Naive thymus-derived CD4-positive, alpha-beta T cell (primary cell): ENCODE measurements at regions of chr7 and their contacts with region 1.

Region 1: GRCh38 chr7:140810830-140811556 is 113.7 kb downstream of the BRAF start:
- DNase-seq: peak; percentile 19 to 76 (median 65)
- ATAC-seq: peak; percentile 91
- H3K4me3 ChIP-seq: no peak overlapping the region
- H3K4me3 Mint-ChIP-seq: no peak overlapping the region
- H3K27ac ChIP-seq: no peak overlapping the region
- H3K27ac Mint-ChIP-seq: peak overlapping the region in 6 of 9 donors; percentile 6 to 82 (median 60)
- H3K4me1 ChIP-seq: no peaks in the 10 kb centered on the region
- H3K4me1 Mint-ChIP-seq: peaks cover 0 to 22% (median 4%) of the 10 kb centered on the region in 7 donors
- H3K27me3 ChIP-seq: no peaks in the 10 kb centered on the region
- H3K27me3 Mint-ChIP-seq: no peaks in the 10 kb centered on the region

Region 2: DNA sequence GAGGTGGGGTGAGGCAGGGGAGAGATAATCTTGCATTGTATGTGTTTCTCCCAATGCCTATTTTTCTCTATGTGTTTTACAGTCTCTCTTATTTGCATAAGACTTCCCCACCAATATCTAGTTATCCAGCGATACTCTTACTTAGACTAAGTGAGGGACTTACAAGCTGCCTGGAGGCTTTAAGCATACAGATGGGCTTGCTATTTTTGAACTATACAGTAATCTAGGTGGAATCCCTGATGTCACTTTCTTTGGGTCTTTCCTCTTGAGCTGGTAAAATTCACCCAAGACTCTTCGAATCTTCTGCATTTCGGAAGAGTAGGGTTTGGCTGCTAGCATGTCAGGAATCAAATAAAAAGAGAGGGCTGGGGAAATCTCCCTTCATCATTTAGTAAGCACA is 37.9 kb before region 1 on chr7:
- CTCF ChIA-PET with region 1: no interaction called
- POLR2A ChIA-PET with region 1: no interaction called
- intact Hi-C with region 1: no loop called
- DNase-seq: no peak
- ATAC-seq: no peak
- H3K4me3 ChIP-seq: no peak overlapping the region
- H3K4me3 Mint-ChIP-seq: no peak overlapping the region
- H3K27ac ChIP-seq: no peak overlapping the region
- H3K27ac Mint-ChIP-seq: no peak overlapping the region
- H3K4me1 ChIP-seq: no peaks in the 10 kb centered on the region
- H3K4me1 Mint-ChIP-seq: no peaks in the 10 kb centered on the region
- H3K27me3 ChIP-seq: no peaks in the 10 kb centered on the region
- H3K27me3 Mint-ChIP-seq: no peaks in the 10 kb centered on the region

Region 3: GRCh38 chr7:140966561-140967226 is 155.7 kb after region 1 on chr7:
- CTCF ChIA-PET with region 1: no interaction called
- POLR2A ChIA-PET with region 1: no interaction called
- intact Hi-C with region 1: loop called in 1 of 2 experiments (anchors 1 kb)
- DNase-seq: no peak
- ATAC-seq: no peak
- H3K4me3 ChIP-seq: no peak overlapping the region
- H3K4me3 Mint-ChIP-seq: no peak overlapping the region
- H3K27ac ChIP-seq: no peak overlapping the region
- H3K27ac Mint-ChIP-seq: no peak overlapping the region
- H3K4me1 ChIP-seq: no peaks in the 10 kb centered on the region
- H3K4me1 Mint-ChIP-seq: no peaks in the 10 kb centered on the region
- H3K27me3 ChIP-seq: no peaks in the 10 kb centered on the region
- H3K27me3 Mint-ChIP-seq: peaks cover 0 to 12% (median 0%) of the 10 kb centered on the region in 5 donors

Region 4: DNA sequence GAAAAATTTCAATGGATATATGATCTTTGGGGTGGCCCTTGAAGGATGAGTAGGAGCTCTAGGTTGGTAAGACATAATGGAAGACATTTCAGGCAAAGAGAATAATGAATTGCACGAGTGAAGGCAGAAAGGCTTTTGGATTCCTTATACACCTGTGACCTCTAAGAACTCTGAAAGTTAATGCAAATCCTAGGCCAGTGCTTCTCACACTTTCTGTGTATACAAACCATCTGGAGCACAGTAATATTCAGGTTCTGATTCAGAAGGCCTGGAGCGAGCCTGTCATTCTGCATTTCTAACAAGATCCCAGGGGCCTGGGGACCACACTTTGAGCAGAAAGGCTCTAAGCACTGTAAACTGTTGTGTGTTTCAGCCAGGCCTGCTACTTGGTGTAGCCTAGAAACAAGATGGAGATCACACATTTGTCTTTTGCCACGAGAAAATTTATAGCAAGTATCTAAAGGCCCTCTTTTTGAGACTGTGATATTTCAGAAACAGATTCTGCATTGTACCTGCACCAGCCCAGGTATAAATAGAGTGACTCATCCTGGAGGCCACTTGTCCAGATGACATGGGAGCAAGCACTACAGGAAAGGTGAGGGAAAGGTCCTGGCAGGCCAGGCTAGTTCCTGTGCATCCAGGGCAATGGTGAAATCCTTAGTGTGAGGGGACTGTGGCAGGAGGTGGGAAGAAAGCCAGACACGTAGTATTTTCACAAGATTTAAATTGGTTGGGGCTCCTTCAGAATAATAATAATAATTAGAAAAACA is 179.4 kb after region 1 on chr7:
- CTCF ChIA-PET with region 1: interaction called, 3 read pairs
- POLR2A ChIA-PET with region 1: no interaction called
- intact Hi-C with region 1: loop called in 1 of 2 experiments (anchors 5 kb)
- DNase-seq: no peak
- ATAC-seq: no peak
- H3K4me3 ChIP-seq: no peak overlapping the region
- H3K4me3 Mint-ChIP-seq: no peak overlapping the region
- H3K27ac ChIP-seq: no peak overlapping the region
- H3K27ac Mint-ChIP-seq: peak overlapping the region in 1 of 9 donors; percentile 28
- H3K4me1 ChIP-seq: no peaks in the 10 kb centered on the region
- H3K4me1 Mint-ChIP-seq: no peaks in the 10 kb centered on the region
- H3K27me3 ChIP-seq: no peaks in the 10 kb centered on the region
- H3K27me3 Mint-ChIP-seq: peaks cover 0 to 14% (median 3%) of the 10 kb centered on the region in 5 donors

Region 5: GRCh38 chr7:141220263-141220880 is 409.4 kb after region 1 on chr7:
- CTCF ChIA-PET with region 1: no interaction called
- POLR2A ChIA-PET with region 1: no interaction called
- intact Hi-C with region 1: loop called in 1 of 2 experiments (anchors 5 kb)
- DNase-seq: no peak
- ATAC-seq: no peak
- H3K4me3 ChIP-seq: no peak overlapping the region
- H3K4me3 Mint-ChIP-seq: no peak overlapping the region
- H3K27ac ChIP-seq: no peak overlapping the region
- H3K27ac Mint-ChIP-seq: no peak overlapping the region
- H3K4me1 ChIP-seq: no peaks in the 10 kb centered on the region
- H3K4me1 Mint-ChIP-seq: no peaks in the 10 kb centered on the region
- H3K27me3 ChIP-seq: no peaks in the 10 kb centered on the region
- H3K27me3 Mint-ChIP-seq: peaks cover 0 to 46% (median 31%) of the 10 kb centered on the region in 5 donors

Region 6: DNA sequence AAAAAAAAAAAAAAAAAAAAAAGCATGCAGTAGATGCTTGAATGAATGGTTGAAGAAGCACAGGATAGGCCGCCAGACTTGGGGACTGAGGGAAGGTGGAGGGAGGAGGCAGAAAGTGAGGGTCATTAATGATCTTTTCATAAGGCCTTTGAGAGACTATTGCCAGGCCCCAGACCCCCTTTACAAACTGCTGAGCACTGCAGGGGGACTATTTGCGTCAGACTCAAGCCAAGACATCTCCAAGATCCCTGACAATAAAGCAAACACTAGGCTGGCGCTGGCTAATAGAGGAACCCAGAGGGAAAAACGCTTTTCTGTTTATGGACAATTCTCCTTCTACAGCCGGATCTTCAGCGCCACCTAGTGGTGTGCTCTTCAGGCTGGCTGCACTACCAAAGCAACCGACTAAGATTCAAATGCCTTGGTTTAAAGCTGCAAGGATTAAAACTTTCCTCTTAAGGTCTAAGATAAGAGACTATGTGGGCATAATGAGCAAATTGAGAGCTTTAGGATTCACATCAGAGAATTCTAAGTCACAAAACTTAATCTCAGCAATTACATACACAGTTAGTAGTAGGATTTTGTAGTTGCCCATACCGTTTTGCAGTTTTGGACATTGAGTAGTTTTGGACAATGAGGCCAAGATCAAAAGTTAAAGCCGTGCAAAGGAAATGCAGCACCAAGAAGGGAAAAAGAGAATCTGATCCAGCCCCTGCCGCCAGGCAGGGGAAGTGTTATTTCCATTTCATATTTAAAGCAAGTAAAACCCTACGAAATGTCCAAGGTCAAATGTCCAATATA is 722.4 kb after region 1 on chr7:
- CTCF ChIA-PET with region 1: interaction called, 6 read pairs
- POLR2A ChIA-PET with region 1: no interaction called
- intact Hi-C with region 1: loop called in 1 of 2 experiments (anchors 1 kb)
- DNase-seq: peak; percentile 10 to 60 (median 46)
- ATAC-seq: peak; percentile 83
- H3K4me3 ChIP-seq: no peak overlapping the region
- H3K4me3 Mint-ChIP-seq: no peak overlapping the region
- H3K27ac ChIP-seq: no peak overlapping the region
- H3K27ac Mint-ChIP-seq: peak overlapping the region in 1 of 9 donors; percentile 70
- H3K4me1 ChIP-seq: no peaks in the 10 kb centered on the region
- H3K4me1 Mint-ChIP-seq: peaks cover 0 to 4% (median 0%) of the 10 kb centered on the region in 7 donors
- H3K27me3 ChIP-seq: peaks cover 0 to 5% of the 10 kb centered on the region in 2 donors
- H3K27me3 Mint-ChIP-seq: peaks cover 32 to 40% (median 34%) of the 10 kb centered on the region in 5 donors